Psoas muscle (tissue), 8 donors: ENCODE measurements at regions of chr10 and their contacts with region 1.

Region 1: DNA sequence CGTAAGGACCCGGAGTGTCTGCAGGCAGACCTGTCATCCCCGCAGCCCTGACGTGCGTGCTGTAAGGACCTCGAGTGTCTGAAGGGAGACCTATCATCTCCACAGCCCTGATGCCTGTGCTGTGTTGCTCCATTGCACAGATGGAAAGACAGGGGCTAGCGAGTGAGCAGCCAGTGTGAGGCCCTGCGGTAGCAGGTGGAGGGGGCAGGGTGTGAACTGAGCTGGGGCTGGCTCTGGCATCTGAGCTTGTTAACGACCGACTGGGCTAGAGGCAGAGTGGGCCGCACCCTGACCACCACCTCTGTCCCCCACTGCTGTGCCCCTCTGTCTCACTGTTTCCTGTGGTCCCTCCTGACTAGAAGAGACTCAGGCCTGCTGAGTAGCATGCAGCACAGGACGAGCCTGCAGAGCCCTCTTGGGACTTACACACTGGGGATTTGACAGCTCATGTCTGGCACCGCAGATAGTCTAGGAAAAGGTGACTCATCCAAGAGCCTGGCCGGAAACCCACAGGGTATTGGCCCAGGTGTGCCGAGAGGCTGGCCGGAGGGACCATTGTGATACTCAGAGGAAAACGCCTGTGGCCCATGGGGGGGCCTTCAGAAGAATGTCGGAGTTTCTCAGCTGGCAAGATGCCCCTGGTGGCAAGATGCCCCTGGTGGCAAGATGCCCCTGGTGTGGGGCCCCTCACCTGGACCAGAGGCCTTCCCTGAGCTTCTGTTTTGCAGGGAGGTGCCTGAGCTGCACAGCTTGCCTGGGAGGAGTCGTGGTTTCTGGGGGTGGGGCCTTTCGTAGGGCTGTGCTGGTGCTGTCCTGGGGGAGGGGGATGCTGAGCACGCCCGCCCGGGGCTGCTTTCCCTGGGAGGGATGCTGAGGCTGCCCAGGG is 34.3 kb downstream of the INPP5A start:
- DNase-seq: peak; percentile 61 to 87
- ATAC-seq: peak; percentile 99 to 100 (median 99)
- H3K4me3 ChIP-seq: no peak overlapping the region
- H3K27ac ChIP-seq: peak overlapping the region; percentile 56
- H3K4me1 ChIP-seq: peaks cover 35% of the 10 kb centered on the region
- H3K27me3 ChIP-seq: no peaks in the 10 kb centered on the region
- CTCF ChIP-seq: no peak

Region 2: DNA sequence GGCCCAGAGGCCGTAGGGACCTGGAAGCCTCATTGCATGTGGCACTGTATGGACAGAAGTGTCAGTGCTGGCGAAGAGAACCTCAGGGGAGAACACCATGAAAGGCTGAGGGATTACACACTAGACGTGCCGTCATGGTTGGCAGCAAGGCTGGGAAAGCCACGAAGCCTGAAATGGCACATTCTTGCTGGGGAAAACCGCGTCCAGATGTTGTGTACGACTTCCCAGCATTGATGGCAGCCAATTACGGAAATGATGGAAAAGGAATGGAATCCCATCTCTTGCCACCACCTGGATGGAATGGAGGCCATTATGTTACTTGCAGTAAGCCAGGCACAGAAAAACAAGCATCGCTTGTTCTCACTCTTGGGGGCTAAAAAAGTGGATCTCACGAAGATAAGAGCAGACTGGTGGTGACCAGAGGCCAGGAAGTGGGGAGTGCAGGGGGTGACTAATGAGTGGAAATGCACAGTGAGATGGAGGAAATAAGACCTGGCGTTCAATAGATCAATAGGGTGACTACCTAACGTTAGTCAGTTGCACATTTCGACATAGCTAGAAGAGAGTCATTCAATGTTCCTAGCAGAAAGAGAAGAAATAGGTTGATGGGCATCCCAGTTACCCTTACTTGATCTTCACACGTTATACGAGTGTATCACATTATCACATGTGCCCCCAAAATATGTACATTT is 189.5 kb before region 1 on chr10:
- intact Hi-C with region 1: loop called in 1 of 2 experiments (anchors 5 kb)
- DNase-seq: peak in 1 of 2 donors; percentile 12
- ATAC-seq: no peak
- H3K4me3 ChIP-seq: no peak overlapping the region
- H3K27ac ChIP-seq: no peak overlapping the region
- H3K4me1 ChIP-seq: no peaks in the 10 kb centered on the region
- H3K27me3 ChIP-seq: no peaks in the 10 kb centered on the region
- CTCF ChIP-seq: no peak

Region 3: DNA sequence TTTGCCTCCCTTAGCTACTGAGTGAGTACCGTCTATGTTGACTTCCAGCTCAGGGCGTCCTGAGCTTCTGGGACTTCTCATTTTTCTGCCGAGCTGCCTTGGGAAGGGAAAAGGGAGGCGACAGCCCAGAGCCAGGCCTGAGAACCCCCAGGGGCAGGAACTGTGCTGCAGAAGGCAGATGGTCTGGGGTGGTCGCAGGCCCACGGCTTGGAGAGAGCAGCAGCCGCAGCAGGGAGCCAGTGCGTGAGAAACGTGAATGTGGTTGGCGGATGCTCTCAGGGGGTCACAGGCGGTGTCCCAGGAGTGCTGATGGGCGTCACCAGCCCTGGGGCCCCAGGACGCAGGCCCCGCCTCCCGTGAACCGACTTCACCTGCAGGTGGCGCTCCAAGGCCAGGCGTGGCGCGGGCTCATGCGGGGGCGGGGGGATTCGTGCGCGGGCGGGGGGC is 184.1 kb before region 1 on chr10:
- intact Hi-C with region 1: loop called (anchors 5 kb)
- DNase-seq: peak; percentile 75 to 85
- ATAC-seq: peak; percentile 52 to 86 (median 74)
- H3K4me3 ChIP-seq: no peak overlapping the region
- H3K27ac ChIP-seq: no peak overlapping the region
- H3K4me1 ChIP-seq: peaks cover 5% of the 10 kb centered on the region
- H3K27me3 ChIP-seq: no peaks in the 10 kb centered on the region
- CTCF ChIP-seq: peak; percentile 64

Region 4: DNA sequence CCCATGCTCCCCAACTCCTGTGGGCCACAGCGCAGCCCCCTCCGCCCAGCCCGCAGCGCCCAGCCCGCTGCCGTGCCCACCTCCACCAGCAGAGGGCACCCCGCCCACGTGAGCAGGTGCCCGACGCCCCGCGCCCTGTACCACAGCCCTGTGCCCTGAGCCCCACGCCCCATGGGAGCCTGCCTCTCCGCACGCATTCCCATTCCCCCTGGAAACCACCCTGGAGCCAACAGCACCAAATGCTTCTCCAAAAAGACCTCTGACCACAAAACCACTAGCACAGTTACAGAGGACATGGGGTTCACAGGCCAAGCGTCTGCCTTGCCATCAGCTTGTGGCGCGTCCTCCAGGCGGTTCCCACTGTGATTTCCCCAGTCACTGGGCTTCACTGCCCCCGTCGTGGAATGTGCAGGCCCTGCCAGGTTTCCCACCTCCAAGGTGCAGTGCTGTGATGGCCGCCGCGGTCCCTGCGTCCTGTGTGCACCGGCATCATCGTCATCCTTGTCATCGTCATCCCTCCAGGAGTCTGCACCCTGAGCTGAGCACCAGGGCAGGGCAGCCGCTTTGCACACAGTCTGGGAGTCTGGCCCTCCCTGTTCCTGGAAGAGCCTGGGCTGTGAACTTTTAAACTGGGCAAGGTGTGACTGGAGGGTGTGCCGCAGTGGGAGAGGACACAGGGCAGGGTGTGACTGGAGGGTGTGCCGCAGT is 113.1 kb before region 1 on chr10:
- intact Hi-C with region 1: loop called (anchors 1 to 5 kb)
- DNase-seq: peak; percentile 62 to 81
- ATAC-seq: peak; percentile 78 to 86 (median 80)
- H3K4me3 ChIP-seq: no peak overlapping the region
- H3K27ac ChIP-seq: no peak overlapping the region
- H3K4me1 ChIP-seq: peaks cover 10% of the 10 kb centered on the region
- H3K27me3 ChIP-seq: peaks cover 0 to 4% (median 0%) of the 10 kb centered on the region in 3 donors
- CTCF ChIP-seq: peak; percentile 93

Region 5: DNA sequence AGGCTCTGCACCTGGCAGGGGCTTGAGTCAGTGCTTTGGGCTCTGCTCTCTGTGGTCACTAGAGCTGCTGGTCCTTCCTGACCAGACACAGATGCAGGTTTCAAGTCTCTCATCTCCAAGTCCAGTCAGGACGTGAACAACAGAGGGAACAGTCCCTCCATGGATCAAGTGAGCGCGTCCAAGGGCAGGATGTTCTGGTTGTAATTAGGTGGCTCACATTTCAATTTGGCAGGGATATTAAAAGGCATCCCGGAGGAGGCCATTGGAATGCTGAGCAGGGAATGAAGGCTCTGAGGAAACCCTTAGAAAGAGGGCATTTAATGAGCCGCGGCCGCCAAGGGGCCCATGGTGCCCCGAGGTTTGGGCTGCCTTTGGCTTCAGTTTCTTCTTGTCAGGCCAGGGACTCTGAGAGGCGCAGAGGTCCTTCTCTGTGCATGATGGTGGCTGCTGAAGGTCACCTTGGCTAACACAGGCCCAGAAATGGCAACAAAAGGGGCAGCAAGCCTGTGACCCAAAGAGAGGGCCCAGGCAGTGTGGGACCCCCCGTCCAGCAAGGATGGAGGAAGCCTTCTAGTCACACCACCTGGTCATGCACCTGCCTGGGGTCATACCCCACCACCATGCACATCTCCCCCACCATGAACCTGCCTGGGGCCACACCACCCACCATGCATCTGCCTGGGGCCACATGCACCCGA is 65.0 kb before region 1 on chr10:
- intact Hi-C with region 1: loop called in 1 of 2 experiments (anchors 10 kb)
- DNase-seq: peak in 1 of 2 donors; percentile 77
- ATAC-seq: peak; percentile 28 to 79 (median 63)
- H3K4me3 ChIP-seq: no peak overlapping the region
- H3K27ac ChIP-seq: peak overlapping the region; percentile 23
- H3K4me1 ChIP-seq: peaks cover 18% of the 10 kb centered on the region
- H3K27me3 ChIP-seq: no peaks in the 10 kb centered on the region
- CTCF ChIP-seq: no peak

Region 6: DNA sequence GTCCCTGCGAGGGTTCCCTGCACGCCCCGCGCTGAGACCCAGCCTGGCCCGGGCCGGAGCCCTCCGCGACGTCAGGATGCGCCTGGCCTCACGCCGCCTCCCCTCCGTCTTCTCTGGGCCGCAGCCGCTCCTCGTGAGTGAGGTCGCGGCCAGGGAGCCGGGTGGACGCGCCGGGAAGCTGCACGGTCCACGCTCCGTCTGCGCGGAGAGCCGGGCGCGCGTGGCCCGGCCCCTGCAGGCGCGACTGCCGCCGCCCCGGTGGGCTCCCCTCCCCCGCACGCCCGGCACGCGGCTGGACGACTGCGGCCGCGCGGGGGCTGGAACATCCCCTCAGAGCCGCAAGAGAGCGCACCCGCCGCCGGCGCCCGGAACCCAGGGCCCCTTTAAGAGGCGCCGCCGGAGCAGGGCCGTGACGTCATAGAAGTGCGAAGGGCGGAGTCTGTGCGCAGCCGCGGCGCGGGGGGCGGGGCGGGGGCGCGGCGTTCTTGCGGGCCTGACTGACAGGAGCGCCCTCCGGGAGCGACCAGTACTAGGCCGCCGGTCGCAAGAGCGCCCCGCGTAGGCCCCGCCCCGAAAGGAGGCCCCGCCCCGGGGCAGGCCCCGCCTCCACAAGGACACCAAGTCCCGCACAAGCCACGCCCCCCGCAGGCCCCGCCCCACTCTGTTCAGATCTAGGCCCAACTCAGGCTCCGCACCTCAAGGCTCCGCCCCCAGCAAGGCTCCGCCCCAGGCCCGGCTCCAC is 34.8 kb before region 1 on chr10:
- intact Hi-C with region 1: loop called in 1 of 2 experiments (anchors 5 kb)
- DNase-seq: peak; percentile 100
- ATAC-seq: peak; percentile 89 to 95 (median 91)
- H3K4me3 ChIP-seq: peak overlapping the region; percentile 75
- H3K27ac ChIP-seq: peak overlapping the region; percentile 80
- H3K4me1 ChIP-seq: peaks cover 50% of the 10 kb centered on the region
- H3K27me3 ChIP-seq: no peaks in the 10 kb centered on the region
- CTCF ChIP-seq: peak; percentile 31

Region 7: DNA sequence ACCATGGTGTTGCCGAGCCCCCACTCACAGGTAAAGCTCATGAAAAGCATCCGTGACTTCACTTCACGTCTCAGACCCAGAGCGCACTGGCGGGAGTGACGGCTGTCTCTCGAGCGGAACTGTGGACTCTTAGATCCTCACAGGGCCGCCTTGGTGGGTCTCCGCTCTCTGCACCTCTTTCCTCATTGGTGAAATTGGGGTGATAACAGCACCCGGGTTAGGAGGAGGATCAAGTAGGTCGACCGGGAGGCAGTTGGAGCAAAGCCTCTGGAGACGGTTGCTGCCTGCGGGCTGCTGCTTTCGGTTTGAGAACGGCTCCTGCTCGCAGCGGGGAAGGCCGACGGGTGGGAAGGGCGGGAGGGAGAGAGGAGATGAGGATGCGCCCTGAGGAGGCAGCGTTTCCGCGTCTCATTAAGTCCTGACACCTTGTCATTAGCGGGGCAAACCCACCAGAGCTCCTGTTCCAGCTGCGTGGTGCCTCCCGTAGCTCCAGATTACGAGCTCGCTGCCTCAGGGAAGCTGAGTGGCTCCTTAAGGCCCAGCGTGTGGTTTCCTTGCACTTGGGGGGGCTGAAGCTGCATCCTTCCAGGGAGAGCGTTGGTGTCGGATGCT is 422.4 kb after region 1 on chr10:
- intact Hi-C with region 1: no loop called
- DNase-seq: peak in 1 of 2 donors; percentile 22
- ATAC-seq: no peak
- H3K4me3 ChIP-seq: peak overlapping the region; percentile 36
- H3K27ac ChIP-seq: no peak overlapping the region
- H3K4me1 ChIP-seq: no peaks in the 10 kb centered on the region
- H3K27me3 ChIP-seq: peaks cover 0 to 38% (median 7%) of the 10 kb centered on the region in 3 donors
- CTCF ChIP-seq: no peak